PC-9 (cell line): ENCODE measurements at regions of chr5 and their contacts with region 1.

Region 1: DNA sequence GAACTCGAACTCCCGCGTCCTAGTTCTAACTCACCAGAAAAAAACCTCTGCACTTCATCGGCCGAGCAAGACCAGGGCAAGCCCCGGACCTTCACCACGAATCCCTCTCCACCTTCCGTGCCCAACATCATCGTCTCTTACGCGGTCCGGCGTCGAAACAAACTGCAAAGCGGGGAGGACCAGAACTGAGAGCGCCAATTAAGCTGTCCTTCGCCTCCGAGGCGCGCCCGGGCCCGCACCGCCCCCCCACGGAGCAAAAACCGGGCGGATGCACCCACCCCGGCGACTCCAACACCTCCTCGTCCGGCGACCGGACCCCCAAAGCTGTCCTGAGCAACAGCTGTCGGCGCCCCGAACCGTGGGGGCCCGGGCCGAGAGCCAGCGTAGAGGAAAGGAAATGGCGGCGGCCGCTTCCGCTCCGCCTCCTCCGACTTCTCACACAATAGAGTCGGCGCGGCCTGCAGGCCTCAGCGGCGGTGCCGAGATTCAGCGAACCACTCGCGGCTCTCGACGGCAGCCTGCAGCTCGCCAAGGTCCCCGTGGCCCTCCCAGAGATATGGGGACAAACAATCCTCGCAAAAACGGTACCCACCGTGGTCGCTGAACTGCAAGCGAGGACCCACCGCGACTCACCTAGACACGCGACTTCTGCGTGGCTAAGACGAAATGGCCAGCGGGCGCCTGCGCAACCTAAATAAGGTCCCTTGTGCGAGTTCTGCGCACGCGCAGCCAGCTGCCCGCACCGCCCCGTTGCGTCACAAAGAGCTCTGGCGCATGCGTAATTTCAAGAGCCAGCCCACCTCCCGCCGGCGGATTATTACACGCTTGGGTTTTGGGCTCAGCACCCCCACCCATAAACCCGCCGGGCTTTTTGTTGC is at the start of gene HNRNPH1:
- DNase-seq: peak; percentile 93 to 99
- H3K4me3 ChIP-seq: peak within 1 kb of the TSS; percentile 95
- H3K27ac ChIP-seq: peak within 1 kb of the TSS; percentile 94
- H3K4me1 ChIP-seq: peaks cover 36% of the 10 kb centered on the region
- H3K27me3 ChIP-seq: no peaks in the 10 kb centered on the region
- CTCF ChIP-seq: 0 out of 2 replicates have a peak, but pooled peaks have one; percentile 28
- total RNA-seq, gene HNRNPH1: 626 and 723 TPM in 2 replicates

Region 2: DNA sequence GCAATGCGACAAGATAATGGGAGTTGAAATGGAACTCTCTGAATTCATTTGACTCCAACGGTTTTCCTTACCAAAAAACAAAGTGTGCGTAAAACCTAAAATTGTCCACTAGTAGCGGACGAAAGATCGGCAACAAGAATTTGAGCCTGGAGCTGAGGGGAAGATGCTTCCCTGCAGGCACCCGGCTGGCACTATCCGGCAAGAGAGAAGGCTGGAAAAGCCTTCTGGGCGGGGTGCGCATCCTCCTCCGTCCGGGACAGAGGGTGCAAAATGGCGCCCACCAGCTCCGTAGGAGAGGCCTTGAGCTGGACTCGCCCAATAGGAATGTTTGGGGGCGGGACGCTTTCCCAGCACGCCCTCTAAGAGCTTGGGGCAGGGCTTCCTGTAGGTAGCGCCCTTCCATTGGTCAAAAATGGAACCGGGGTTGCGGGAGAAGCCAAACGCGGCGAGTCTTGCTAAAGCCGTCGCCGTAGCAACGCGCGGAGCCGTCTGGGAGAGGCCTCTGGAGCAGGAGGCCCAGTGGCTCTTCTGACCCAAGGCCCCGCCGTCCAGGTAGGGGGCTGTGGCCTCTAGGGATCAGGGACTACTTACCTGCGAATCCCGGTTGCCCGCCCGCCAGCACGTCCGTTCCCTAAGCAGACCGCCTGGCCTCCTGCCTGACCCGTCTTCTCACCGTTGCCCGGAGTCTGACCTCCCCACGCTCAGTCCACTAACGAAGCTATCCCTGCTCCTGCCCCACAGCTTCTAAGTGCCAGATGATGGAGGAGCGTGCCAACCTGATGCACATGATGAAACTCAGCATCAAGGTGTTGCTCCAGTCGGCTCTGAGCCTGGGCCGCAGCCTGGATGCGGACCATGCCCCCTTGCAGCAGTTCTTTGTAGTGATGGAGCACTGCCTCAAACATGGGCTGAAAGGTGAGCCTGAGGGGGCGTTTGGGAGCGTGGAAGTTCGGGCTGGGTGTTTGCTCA is 63.7 kb before region 1 on chr5:
- CTCF ChIA-PET with region 1: no interaction called
- POLR2A ChIA-PET with region 1: interaction called, 5 read pairs
- intact Hi-C with region 1: loop called (anchors 5 kb)
- DNase-seq: peak; percentile 96 to 98
- H3K4me3 ChIP-seq: peak overlapping the region; percentile 91
- H3K27ac ChIP-seq: peak overlapping the region; percentile 78
- H3K4me1 ChIP-seq: peaks cover 9% of the 10 kb centered on the region; the same call in 1 of the 2 replicates
- H3K27me3 ChIP-seq: no peaks in the 10 kb centered on the region
- CTCF ChIP-seq: no peak

Region 3: DNA sequence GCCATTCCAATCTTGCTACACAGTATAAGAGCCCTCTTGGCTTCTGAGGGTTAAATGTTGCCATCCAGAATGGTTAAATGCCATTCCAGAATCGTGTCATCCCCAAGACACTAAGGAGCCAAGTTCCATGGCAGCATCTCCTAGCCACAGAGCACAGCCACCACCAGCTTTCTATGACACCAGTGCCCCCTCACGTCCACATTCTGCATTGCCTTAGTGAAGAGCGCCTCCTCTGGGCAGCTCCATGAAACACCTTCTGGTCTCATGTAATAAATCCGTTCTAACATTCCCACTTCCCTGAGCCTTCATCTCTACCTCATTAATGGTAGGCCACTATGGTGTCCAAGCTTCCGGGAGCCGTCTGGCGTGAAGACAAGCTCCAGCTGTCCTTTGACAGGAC is 45.1 kb after region 1 on chr5:
- CTCF ChIA-PET with region 1: no interaction called
- POLR2A ChIA-PET with region 1: interaction called, 11 read pairs
- intact Hi-C with region 1: no loop called
- DNase-seq: no peak
- H3K4me3 ChIP-seq: no peak overlapping the region
- H3K27ac ChIP-seq: no peak overlapping the region
- H3K4me1 ChIP-seq: no peaks in the 10 kb centered on the region
- H3K27me3 ChIP-seq: no peaks in the 10 kb centered on the region
- CTCF ChIP-seq: peak; percentile 61

Region 4: DNA sequence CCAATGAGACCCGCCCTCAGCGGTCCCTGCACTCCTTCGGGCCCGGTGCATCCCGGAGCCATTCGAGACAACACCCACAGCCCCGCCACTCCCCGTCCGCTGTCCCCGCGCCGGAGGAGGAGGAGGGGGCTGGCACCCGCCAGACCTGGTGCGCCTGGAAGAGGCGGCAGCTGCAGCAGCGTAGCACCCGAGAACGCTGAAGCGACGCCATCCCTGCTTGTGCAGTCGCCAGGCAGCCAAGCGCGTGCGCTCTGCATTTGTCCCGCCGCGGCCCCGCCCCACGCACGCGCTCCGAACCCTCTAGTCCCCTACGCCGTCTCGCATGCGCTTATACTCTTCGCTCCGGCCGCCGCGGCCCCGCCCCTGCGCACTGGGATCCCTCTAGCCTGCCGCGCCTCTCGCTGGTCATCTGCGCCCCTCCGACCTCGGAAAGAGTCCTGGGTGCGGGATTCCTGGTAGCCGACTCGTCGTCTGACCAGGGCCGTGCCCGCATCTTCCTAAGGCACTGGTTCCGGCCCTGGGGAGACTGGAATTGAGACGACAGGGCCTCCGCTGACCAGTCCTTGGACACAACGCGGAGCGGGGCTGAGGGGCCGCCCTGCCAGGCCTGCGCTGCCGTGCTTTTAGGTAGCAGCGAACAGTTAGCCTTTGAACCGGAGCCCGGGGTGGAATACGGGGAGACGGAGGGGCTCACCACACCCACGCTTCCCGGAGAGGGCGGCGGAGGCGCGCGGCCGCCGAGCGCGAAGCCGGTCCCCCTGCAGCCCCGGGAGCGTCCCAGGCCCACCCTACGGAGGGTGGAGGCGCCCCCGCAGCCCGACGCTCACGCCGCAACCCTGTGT is 235.6 kb after region 1 on chr5 and contains the start of gene MRNIP:
- CTCF ChIA-PET with region 1: no interaction called
- POLR2A ChIA-PET with region 1: no interaction called
- intact Hi-C with region 1: loop called (anchors 2 kb)
- DNase-seq: peak; percentile 85 to 98
- H3K4me3 ChIP-seq: peak within 1 kb of the TSS; percentile 83
- H3K27ac ChIP-seq: peak within 1 kb of the TSS; percentile 43; the same call in 1 of the 2 replicates
- H3K4me1 ChIP-seq: peaks cover 6% of the 10 kb centered on the region; the same call in 1 of the 2 replicates
- H3K27me3 ChIP-seq: no peaks in the 10 kb centered on the region
- CTCF ChIP-seq: no peak
- total RNA-seq, gene MRNIP: 39.9 and 54.0 TPM in 2 replicates

Region 5: GRCh38 chr5:179986328-179986727 is 363.1 kb after region 1 on chr5:
- CTCF ChIA-PET with region 1: no interaction called
- POLR2A ChIA-PET with region 1: no interaction called
- intact Hi-C with region 1: no loop called
- DNase-seq: no peak
- H3K4me3 ChIP-seq: no peak overlapping the region
- H3K27ac ChIP-seq: no peak overlapping the region
- H3K4me1 ChIP-seq: no peaks in the 10 kb centered on the region
- H3K27me3 ChIP-seq: no peaks in the 10 kb centered on the region
- CTCF ChIP-seq: no peak